SK-N-SH (cell line): ENCODE measurements at regions of chr16 and their contacts with region 1.

Region 1: DNA sequence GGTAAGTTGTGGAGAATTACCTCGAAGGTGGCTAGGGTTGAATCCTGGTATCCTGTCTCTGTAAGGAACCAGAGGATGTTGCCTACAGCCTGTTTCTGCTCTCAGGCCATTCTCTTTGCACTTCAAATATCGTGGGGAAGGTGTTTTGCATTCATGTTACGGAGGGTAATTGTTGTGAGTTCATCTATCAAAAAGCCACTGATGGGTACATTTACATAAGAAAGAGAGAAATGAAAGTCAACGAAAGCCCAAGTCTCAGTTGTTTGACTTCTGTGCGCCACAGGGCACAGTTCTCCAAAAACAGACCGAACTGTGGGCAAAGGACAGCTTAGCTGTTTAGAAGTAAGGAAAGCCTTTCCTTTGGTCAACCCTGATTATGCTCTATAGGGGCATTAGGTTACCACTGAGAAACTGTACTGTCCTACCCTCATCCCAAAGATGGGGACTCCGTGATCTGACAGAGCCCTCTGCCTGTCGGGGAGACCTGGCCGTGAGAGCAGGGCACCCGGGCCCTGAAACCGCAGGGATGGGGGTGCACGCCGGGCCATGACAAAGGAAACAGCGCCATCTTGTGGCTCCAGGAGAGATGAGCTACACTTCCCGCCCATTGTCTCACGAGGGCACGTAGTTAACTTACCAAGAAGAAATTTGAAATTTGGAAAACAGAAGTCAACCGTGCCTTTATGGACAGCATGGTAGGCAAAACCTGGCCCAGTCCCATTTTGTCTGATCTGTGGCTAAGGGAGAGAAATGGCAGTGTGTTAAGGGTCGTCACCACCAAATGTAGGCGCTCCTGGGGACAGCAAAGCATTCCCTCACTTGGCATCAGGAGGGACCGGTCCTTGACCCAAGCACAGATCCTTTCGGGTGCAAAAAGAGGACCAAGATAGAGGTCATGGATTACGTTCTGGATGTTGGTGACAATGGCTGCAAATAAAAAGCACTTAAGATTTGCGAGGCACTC is 74.5 kb upstream of the DYNLRB2 start:
- DNase-seq: peak; percentile 79
- H3K4me3 ChIP-seq: peak overlapping the region in 1 of 2 experiments; percentile 50; a peak in 1 of 4 replicates
- H3K27ac ChIP-seq: no peak overlapping the region
- H3K4me1 ChIP-seq: no peaks in the 10 kb centered on the region; a peak in 1 of 4 replicates
- H3K27me3 ChIP-seq: no peaks in the 10 kb centered on the region
- CTCF ChIP-seq: peak; percentile 53
- EP300 ChIP-seq: no peak
- RAD21 ChIP-seq: peak; percentile 80

Region 2: GRCh38 chr16:80390871-80391489 is 75.3 kb before region 1 on chr16:
- CTCF ChIA-PET with region 1: no interaction called
- POLR2A ChIA-PET with region 1: no interaction called
- DNase-seq: no peak
- H3K4me3 ChIP-seq: no peak overlapping the region
- H3K27ac ChIP-seq: no peak overlapping the region
- H3K4me1 ChIP-seq: no peaks in the 10 kb centered on the region
- H3K27me3 ChIP-seq: no peaks in the 10 kb centered on the region
- CTCF ChIP-seq: no peak
- EP300 ChIP-seq: no peak
- RAD21 ChIP-seq: no peak

Region 3: DNA sequence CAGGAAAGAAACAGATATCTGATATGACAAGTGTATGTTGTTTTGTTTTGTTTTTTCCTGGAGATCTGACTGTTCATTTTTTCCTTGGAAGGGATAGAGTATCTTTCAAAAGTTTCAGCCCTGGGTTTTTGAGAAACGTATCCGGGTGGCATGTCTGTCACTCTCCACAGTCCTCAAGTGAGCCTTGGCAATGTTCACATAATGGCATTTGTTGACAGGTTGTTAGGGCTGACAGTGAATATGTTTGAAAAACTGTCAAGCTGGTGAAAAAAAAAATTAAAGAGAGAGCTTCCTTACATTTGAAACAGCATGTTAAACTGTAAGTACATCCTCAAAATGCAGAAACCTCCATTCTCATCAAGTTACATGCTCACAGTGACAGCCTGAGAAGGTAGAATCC is 38.5 kb before region 1 on chr16:
- CTCF ChIA-PET with region 1: no interaction called
- POLR2A ChIA-PET with region 1: no interaction called
- DNase-seq: no peak
- H3K4me3 ChIP-seq: no peak overlapping the region
- H3K27ac ChIP-seq: no peak overlapping the region
- H3K4me1 ChIP-seq: no peaks in the 10 kb centered on the region
- H3K27me3 ChIP-seq: no peaks in the 10 kb centered on the region
- CTCF ChIP-seq: no peak
- EP300 ChIP-seq: no peak
- RAD21 ChIP-seq: no peak

Region 4: GRCh38 chr16:80480664-80481063 is 14.4 kb after region 1 on chr16:
- CTCF ChIA-PET with region 1: interaction called, 20 read pairs
- POLR2A ChIA-PET with region 1: no interaction called
- DNase-seq: no peak
- H3K4me3 ChIP-seq: no peak overlapping the region
- H3K27ac ChIP-seq: no peak overlapping the region
- H3K4me1 ChIP-seq: no peaks in the 10 kb centered on the region
- H3K27me3 ChIP-seq: no peaks in the 10 kb centered on the region
- CTCF ChIP-seq: no peak
- EP300 ChIP-seq: no peak
- RAD21 ChIP-seq: no peak